Activated T-helper 2 cell treated with anti-CD3 and anti-CD28 coated beads, Interferon-gamma antibody, Interleukin-2, Interleukin-4, amounts not matched to agents 10 μg/mL and 5 μg/mL and 100 μg/mL, durations not matched to agents 14 hours and 24 hours and 36 hours (primary cell): ENCODE measurements at regions of chr15 and their contacts with region 1.

Region 1: DNA sequence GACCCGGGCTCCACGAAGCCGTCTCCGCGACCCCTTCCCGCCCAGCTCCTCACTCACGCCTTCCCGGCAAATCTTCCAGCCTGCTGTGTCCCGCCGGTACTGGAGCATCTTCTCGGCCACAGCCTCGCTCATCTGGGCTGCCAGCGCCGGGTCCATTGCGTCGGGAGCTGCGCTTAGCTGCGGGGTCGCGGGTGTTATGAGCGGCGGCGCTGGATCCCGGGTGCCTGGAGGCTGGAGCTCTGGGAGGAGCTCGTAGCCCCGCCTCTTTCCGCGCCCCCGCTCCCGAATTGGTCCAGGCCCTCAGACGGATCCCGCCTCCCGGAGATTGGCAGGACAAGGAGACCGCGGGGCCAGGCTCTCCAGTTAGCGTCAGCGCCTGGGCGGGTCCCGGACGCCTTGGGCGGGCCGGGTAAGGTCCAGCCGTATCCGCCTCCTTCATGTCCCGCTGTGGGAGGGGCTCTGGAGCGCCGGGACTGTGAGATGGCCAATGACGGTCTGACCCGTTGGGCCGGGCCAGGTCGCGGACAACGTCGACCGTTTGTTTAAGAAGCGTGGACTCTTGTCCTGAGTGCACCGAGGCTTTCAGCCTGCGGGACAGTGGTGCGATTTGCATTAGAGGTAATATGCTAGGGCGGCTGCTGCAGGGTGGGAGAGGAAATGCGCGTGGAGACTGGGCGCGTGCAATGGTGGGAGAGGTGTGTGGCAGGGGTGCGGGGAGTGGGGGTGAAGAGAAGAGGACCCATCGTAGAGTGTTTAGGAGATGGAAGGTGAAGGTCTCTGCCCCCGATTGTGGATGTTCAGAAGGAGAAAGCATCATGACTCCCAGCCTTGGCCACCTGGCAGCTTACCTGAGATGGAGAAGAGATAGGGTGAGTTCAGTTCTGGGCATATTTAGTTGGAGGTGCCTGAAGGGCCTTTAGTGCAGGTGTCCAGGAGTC is at the start of gene STARD5:
- DNase-seq: peak; percentile 95
- H3K4me3 Mint-ChIP-seq: peak within 1 kb of the TSS; percentile 95
- H3K27ac Mint-ChIP-seq: peak within 1 kb of the TSS; percentile 75
- H3K4me1 Mint-ChIP-seq: peaks cover 20% of the 10 kb centered on the region
- H3K27me3 Mint-ChIP-seq: no peaks in the 10 kb centered on the region
- total RNA-seq, gene STARD5: 3.3 and 4.5 TPM in 2 replicates

Region 2: DNA sequence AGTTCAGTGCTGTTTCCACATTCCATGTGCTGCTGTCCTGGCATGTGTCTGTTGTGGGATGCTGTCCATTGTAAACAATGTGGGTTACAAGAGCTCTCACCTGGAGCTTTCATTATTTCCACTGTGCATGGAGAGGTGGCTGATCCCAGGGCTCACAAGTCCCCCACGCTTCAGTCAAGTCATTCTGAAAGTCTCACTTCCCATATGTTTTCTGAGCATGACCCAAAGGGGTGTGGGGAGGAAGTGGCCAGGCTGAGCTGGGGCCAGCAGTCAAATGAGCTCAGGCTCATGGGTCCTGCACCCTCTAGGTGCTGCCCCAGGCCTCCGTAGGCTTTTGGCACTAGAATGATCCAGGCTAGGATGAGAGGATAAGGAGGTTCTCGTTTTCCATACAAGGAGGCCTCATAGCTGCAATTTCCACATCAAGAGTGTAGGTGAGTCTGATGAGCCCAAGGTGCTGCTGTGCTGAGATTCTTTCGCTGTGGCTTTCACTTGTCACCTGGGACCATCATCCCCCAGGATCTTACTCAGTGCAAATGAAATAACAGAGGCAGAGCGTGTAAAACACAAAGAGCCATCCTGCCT is 22.3 kb before region 1 on chr15:
- intact Hi-C with region 1: loop called (anchors 1 kb)
- DNase-seq: no peak
- H3K4me3 Mint-ChIP-seq: peak overlapping the region; percentile 96
- H3K27ac Mint-ChIP-seq: peak overlapping the region; percentile 69
- H3K4me1 Mint-ChIP-seq: peaks cover 84% of the 10 kb centered on the region
- H3K27me3 Mint-ChIP-seq: no peaks in the 10 kb centered on the region

Region 3: DNA sequence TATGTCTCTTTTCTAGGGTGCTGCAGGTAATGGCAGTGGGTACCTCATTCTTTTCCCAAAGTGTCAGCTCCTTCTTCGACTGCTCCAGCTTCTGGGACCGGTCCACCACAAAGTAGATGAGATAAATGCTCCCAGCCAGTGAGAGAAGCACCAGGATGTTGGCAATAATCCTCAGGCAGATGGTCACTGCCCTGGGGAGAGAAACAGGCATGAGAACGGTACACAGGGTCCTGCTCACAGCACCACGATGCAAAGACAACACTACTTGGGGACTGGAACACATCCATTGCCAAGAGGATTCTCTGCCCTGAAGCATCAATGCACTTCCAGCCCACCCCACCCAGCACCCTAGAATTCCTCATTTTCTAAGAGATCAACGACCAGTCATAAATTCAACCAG is 27.4 kb after region 1 on chr15:
- intact Hi-C with region 1: no loop called
- DNase-seq: no peak
- H3K4me3 Mint-ChIP-seq: no peak overlapping the region
- H3K27ac Mint-ChIP-seq: no peak overlapping the region
- H3K4me1 Mint-ChIP-seq: peaks cover under 1% of the 10 kb centered on the region
- H3K27me3 Mint-ChIP-seq: peaks cover 8% of the 10 kb centered on the region